Caco-2 (cell line): ENCODE measurements at regions of chr2 and their contacts with region 1.

Region 1: GRCh38 chr2:157302492-157303099 is 23.0 kb downstream of the ERMN start:
- DNase-seq: peak in 1 of 2 experiments; percentile 72
- H3K4me3 ChIP-seq: no peak overlapping the region
- H3K4me3 Mint-ChIP-seq: no peak overlapping the region
- H3K27ac Mint-ChIP-seq: no peak overlapping the region
- H3K4me1 ChIP-seq: peaks cover 36% of the 10 kb centered on the region
- H3K4me1 Mint-ChIP-seq: peaks cover 34% of the 10 kb centered on the region
- H3K27me3 ChIP-seq: no peaks in the 10 kb centered on the region
- H3K27me3 Mint-ChIP-seq: no peaks in the 10 kb centered on the region
- CTCF ChIP-seq: peak; percentile 69 to 77

Region 2: GRCh38 chr2:157122776-157123175 is 179.8 kb before region 1 on chr2:
- CTCF ChIA-PET with region 1: no interaction called
- POLR2A ChIA-PET with region 1: no interaction called
- intact Hi-C with region 1: no loop called
- DNase-seq: no peak
- H3K4me3 ChIP-seq: no peak overlapping the region
- H3K4me3 Mint-ChIP-seq: no peak overlapping the region
- H3K27ac Mint-ChIP-seq: no peak overlapping the region
- H3K4me1 ChIP-seq: no peaks in the 10 kb centered on the region
- H3K4me1 Mint-ChIP-seq: peaks cover 7% of the 10 kb centered on the region
- H3K27me3 ChIP-seq: no peaks in the 10 kb centered on the region
- H3K27me3 Mint-ChIP-seq: peaks cover 3% of the 10 kb centered on the region
- CTCF ChIP-seq: no peak

Region 3: GRCh38 chr2:157327621-157328500 is 25.3 kb after region 1 on chr2:
- CTCF ChIA-PET with region 1: interaction called, 27 read pairs
- POLR2A ChIA-PET with region 1: no interaction called
- intact Hi-C with region 1: loop called (anchors 1 kb)
- DNase-seq: peak; percentile 84 to 85
- H3K4me3 ChIP-seq: no peak overlapping the region
- H3K4me3 Mint-ChIP-seq: no peak overlapping the region
- H3K27ac Mint-ChIP-seq: no peak overlapping the region
- H3K4me1 ChIP-seq: peaks cover 37% of the 10 kb centered on the region
- H3K4me1 Mint-ChIP-seq: peaks cover 11% of the 10 kb centered on the region
- H3K27me3 ChIP-seq: no peaks in the 10 kb centered on the region
- H3K27me3 Mint-ChIP-seq: no peaks in the 10 kb centered on the region
- CTCF ChIP-seq: peak; percentile 92 to 96

Region 4: GRCh38 chr2:157386247-157386646 is 83.7 kb after region 1 on chr2:
- CTCF ChIA-PET with region 1: no interaction called
- POLR2A ChIA-PET with region 1: no interaction called
- intact Hi-C with region 1: no loop called
- DNase-seq: no peak
- H3K4me3 ChIP-seq: no peak overlapping the region
- H3K4me3 Mint-ChIP-seq: no peak overlapping the region
- H3K27ac Mint-ChIP-seq: no peak overlapping the region
- H3K4me1 ChIP-seq: no peaks in the 10 kb centered on the region
- H3K4me1 Mint-ChIP-seq: no peaks in the 10 kb centered on the region
- H3K27me3 ChIP-seq: no peaks in the 10 kb centered on the region
- H3K27me3 Mint-ChIP-seq: no peaks in the 10 kb centered on the region
- CTCF ChIP-seq: no peak

Region 5: GRCh38 chr2:157492189-157492773 is 189.7 kb after region 1 on chr2:
- CTCF ChIA-PET with region 1: interaction called, 12 read pairs
- POLR2A ChIA-PET with region 1: no interaction called
- intact Hi-C with region 1: loop called (anchors 1 kb)
- DNase-seq: peak; percentile 63 to 74
- H3K4me3 ChIP-seq: no peak overlapping the region
- H3K4me3 Mint-ChIP-seq: no peak overlapping the region
- H3K27ac Mint-ChIP-seq: no peak overlapping the region
- H3K4me1 ChIP-seq: no peaks in the 10 kb centered on the region
- H3K4me1 Mint-ChIP-seq: no peaks in the 10 kb centered on the region
- H3K27me3 ChIP-seq: no peaks in the 10 kb centered on the region
- H3K27me3 Mint-ChIP-seq: no peaks in the 10 kb centered on the region
- CTCF ChIP-seq: peak; percentile 78 to 87

Region 6: GRCh38 chr2:157628477-157629415 is 326.1 kb after region 1 on chr2 and contains the start of gene ACVR1C:
- CTCF ChIA-PET with region 1: interaction called, 9 read pairs
- POLR2A ChIA-PET with region 1: no interaction called
- intact Hi-C with region 1: loop called (anchors 2 kb)
- DNase-seq: peak; percentile 77 to 87
- H3K4me3 ChIP-seq: peak within 1 kb of the TSS; percentile 70
- H3K4me3 Mint-ChIP-seq: peak within 1 kb of the TSS; percentile 85
- H3K27ac Mint-ChIP-seq: no peak within 1 kb of the TSS
- H3K4me1 ChIP-seq: 0 out of 2 replicates have a peak, but pooled peaks cover 3% of the 10 kb centered on the region
- H3K4me1 Mint-ChIP-seq: peaks cover 6% of the 10 kb centered on the region
- H3K27me3 ChIP-seq: peaks cover 1% of the 10 kb centered on the region; the same call in 1 of the 2 replicates
- H3K27me3 Mint-ChIP-seq: peaks cover 20% of the 10 kb centered on the region
- CTCF ChIP-seq: peak; percentile 72 to 74
- total RNA-seq, gene ACVR1C: 2.0 and 2.1 TPM in 2 replicates

Region 7: GRCh38 chr2:158006961-158007719 is 704.5 kb after region 1 on chr2:
- CTCF ChIA-PET with region 1: no interaction called
- POLR2A ChIA-PET with region 1: no interaction called
- intact Hi-C with region 1: loop called (anchors 1 kb)
- DNase-seq: no peak
- H3K4me3 ChIP-seq: no peak overlapping the region
- H3K4me3 Mint-ChIP-seq: no peak overlapping the region
- H3K27ac Mint-ChIP-seq: no peak overlapping the region
- H3K4me1 ChIP-seq: peaks cover 4% of the 10 kb centered on the region; the same call in 1 of the 2 replicates
- H3K4me1 Mint-ChIP-seq: no peaks in the 10 kb centered on the region
- H3K27me3 ChIP-seq: no peaks in the 10 kb centered on the region
- H3K27me3 Mint-ChIP-seq: no peaks in the 10 kb centered on the region
- CTCF ChIP-seq: peak in 1 of 2 experiments; percentile 7